ENCODE measurements at regions of chr6 and their contacts with region 1.

Region 1: DNA sequence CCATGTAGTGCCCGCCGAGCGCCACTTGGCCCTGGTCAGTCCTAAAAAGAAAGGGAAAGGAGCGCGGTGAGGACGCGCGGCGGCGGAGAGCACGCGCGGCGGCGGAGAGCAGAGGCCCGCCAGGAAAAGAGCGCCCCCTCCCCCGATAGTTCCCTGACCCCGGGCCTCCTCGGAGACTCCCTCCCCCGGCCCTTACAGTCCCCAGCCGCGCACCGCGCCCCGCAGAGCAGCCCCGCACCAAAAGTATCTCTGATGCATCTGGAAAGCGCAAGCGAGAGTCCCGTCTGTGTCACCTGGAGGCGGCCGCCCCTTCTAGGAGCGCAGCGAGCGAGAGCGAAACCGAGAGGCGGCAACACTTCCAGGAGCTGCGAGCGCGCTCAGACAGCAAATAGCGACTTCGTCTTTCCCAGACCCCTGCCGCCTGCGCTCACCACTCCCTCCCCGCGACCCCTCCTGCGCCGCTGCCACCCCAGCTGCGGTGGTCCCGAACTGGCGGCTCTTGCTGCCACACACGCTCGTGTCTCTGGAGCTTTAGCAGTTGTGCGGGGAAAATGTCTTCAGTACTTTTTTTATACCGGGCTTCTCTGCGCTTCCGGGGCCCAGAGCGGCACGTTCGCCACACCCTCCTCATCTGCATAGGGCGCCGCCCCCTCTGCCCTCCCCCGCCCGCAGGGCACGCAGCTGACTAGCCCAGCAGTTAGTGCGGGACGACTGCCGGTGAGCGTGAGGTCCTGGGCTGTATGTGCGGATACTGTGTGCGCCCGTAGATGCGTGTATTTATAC is at the start of gene TENT5A:
- DNase-seq: peak; percentile 89
- H3K4me3 ChIP-seq: peak within 1 kb of the TSS; percentile 90 to 96 (median 93)
- H3K27ac ChIP-seq: peak within 1 kb of the TSS; percentile 86
- H3K4me1 ChIP-seq: peaks cover 13% of the 10 kb centered on the region
- H3K27me3 ChIP-seq: no peaks in the 10 kb centered on the region
- CTCF ChIP-seq: peak in 1 of 2 donors; percentile 8
- total RNA-seq, gene TENT5A: 2.6 to 4.7 TPM

Region 2: DNA sequence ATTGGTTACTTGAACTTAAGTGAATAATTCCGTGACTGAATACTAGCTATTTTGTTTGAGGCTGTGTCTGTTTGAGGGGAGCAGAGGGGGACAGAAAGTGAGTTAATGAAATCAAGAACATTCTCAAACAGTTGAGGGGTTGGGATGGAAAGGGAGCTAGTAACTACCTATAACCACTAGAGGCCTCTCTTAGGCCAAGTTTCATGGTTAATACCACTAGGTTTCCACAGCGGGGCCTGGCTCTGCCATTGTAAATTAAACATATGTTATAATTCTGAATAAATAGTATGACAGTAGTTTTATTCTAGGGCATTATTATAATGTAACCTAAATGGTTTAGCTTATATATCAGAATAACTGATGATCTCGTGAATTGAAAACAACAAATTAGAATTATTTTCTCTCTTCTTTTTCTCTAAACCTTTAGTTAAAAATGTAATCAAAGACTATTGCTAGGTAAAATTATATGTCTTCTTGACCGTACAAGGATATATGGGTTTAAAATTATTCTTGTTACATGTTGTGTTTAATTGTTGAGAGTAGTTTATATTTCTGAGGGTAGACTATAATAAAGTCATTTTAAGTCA is 1537.8 kb before region 1 on chr6:
- CTCF ChIA-PET with region 1: no interaction called
- dilution Hi-C with region 1: no loop called
- in situ Hi-C with region 1: no loop called
- intact Hi-C with region 1: loop called (anchors 5 kb)
- DNase-seq: peak; percentile 28
- H3K4me3 ChIP-seq: no peak overlapping the region
- H3K27ac ChIP-seq: no peak overlapping the region
- H3K4me1 ChIP-seq: no peaks in the 10 kb centered on the region
- H3K27me3 ChIP-seq: no peaks in the 10 kb centered on the region
- CTCF ChIP-seq: peak; percentile 78 to 83

Region 3: DNA sequence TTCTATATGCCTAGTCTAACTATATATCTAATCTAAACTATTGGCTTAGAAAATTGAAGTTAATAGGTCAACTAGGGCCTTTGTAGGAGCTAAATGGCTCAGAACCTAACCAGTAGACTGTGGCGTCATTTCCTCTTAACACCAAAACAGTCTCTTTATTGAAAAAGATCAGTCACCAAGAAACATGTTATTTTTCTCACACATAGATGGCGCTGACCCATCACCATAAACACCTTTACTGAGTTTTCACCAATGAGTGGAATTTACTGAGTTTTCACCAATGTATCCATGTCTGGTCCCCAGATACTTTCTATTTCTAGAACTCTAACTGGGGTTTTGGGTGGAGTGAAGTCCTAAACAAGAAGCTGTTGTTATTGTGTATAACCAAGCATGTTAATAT is 1009.8 kb before region 1 on chr6:
- CTCF ChIA-PET with region 1: no interaction called
- dilution Hi-C with region 1: no loop called
- in situ Hi-C with region 1: no loop called
- intact Hi-C with region 1: loop called (anchors 5 kb)
- DNase-seq: peak; percentile 19
- H3K4me3 ChIP-seq: no peak overlapping the region
- H3K27ac ChIP-seq: no peak overlapping the region
- H3K4me1 ChIP-seq: no peaks in the 10 kb centered on the region
- H3K27me3 ChIP-seq: no peaks in the 10 kb centered on the region
- CTCF ChIP-seq: peak; percentile 16 to 47

Region 4: GRCh38 chr6:81606965-81607381 is 145.4 kb before region 1 on chr6:
- CTCF ChIA-PET with region 1: no interaction called
- dilution Hi-C with region 1: no loop called
- in situ Hi-C with region 1: no loop called
- intact Hi-C with region 1: no loop called
- DNase-seq: no peak
- H3K4me3 ChIP-seq: no peak overlapping the region
- H3K27ac ChIP-seq: no peak overlapping the region
- H3K4me1 ChIP-seq: no peaks in the 10 kb centered on the region
- H3K27me3 ChIP-seq: no peaks in the 10 kb centered on the region
- CTCF ChIP-seq: no peak

Region 5: GRCh38 chr6:81938014-81938856 is 185.9 kb after region 1 on chr6:
- CTCF ChIA-PET with region 1: no interaction called
- dilution Hi-C with region 1: no loop called
- in situ Hi-C with region 1: no loop called
- intact Hi-C with region 1: loop called (anchors 1 kb)
- DNase-seq: peak; percentile 97
- H3K4me3 ChIP-seq: no peak overlapping the region
- H3K27ac ChIP-seq: peak overlapping the region; percentile 98
- H3K4me1 ChIP-seq: peaks cover 29% of the 10 kb centered on the region
- H3K27me3 ChIP-seq: no peaks in the 10 kb centered on the region
- CTCF ChIP-seq: no peak

Region 6: DNA sequence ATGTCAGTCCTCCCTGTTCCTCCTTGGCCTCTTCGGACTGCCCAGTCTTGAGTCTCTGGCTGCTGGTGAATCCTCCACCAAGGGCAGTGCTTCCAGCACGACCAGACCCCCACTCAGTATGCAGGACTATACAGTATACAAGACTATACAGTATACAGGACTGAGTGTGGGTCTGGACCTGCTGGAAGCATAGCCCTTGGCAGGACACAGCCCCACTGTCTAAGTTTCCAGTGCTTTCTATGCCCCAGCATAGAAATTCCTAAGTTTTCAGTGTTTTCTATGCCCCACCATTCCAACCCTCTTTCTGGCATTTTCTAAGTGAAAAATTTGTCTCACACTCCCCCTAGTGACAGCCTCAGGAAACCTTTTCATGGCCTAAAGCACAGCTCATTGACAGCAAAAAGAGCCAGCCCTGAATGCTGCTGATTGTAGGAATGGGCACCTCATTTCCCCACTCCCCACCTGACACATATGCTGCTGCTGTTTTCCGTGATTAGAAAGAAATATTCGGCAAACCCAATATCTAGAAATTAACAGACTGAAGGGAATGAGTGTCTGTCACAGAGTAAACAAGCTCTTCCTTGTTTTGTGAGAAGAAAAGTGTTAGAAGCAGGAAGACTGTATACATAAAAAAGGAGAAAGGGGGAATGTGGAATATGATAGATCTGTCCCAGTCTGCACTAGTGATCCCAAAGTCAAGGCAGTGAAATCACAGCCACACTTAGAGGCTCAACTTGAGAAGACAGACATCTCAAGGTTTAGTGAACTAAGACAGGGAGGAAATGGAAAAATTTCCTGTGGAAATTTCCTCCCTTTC is 288.3 kb after region 1 on chr6:
- CTCF ChIA-PET with region 1: interaction called, 11 read pairs
- dilution Hi-C with region 1: no loop called
- in situ Hi-C with region 1: no loop called
- intact Hi-C with region 1: loop called (anchors 1 kb)
- DNase-seq: peak; percentile 24
- H3K4me3 ChIP-seq: no peak overlapping the region
- H3K27ac ChIP-seq: no peak overlapping the region
- H3K4me1 ChIP-seq: no peaks in the 10 kb centered on the region
- H3K27me3 ChIP-seq: no peaks in the 10 kb centered on the region
- CTCF ChIP-seq: peak; percentile 82 to 87